Endothelial cell of umbilical vein (primary cell): ENCODE measurements at regions of chr1 and their contacts with region 1.

Region 1: GRCh38 chr1:151459331-151460046 is at the start of gene POGZ:
- DNase-seq: peak; percentile 90
- H3K4me3 ChIP-seq: peak within 1 kb of the TSS; percentile 52 to 95 (median 94)
- H3K27ac ChIP-seq: peak within 1 kb of the TSS; percentile 63
- H3K4me1 ChIP-seq: peaks cover 9% of the 10 kb centered on the region
- H3K27me3 ChIP-seq: peaks cover 4 to 14% of the 10 kb centered on the region in 2 experiments
- CTCF ChIP-seq: no peak
- POLR2A ChIP-seq: peak; percentile 53
- total RNA-seq, gene POGZ: 91.2 and 96.7 TPM in 2 replicates

Region 2: GRCh38 chr1:151472856-151473731 is 13.6 kb after region 1 on chr1:
- CTCF ChIA-PET with region 1: interaction called, 8 read pairs
- POLR2A ChIA-PET with region 1: interaction called, 5 read pairs
- dilution Hi-C with region 1: no loop called
- intact Hi-C with region 1: loop called (anchors 1 kb)
- DNase-seq: peak; percentile 52
- H3K4me3 ChIP-seq: peak overlapping the region; percentile 40 to 64 (median 41)
- H3K27ac ChIP-seq: no peak overlapping the region
- H3K4me1 ChIP-seq: peaks cover 2% of the 10 kb centered on the region
- H3K27me3 ChIP-seq: no peaks in the 10 kb centered on the region
- CTCF ChIP-seq: no peak
- POLR2A ChIP-seq: peak; percentile 39

Region 3: GRCh38 chr1:151510957-151511635 is 51.6 kb after region 1 on chr1 and contains the start of gene CGN:
- CTCF ChIA-PET with region 1: no interaction called
- POLR2A ChIA-PET with region 1: interaction called, 8 read pairs
- dilution Hi-C with region 1: no loop called
- intact Hi-C with region 1: loop called (anchors 2 kb)
- DNase-seq: peak; percentile 89
- H3K4me3 ChIP-seq: peak within 1 kb of the TSS; percentile 29 to 44 (median 38)
- H3K27ac ChIP-seq: no peak within 1 kb of the TSS
- H3K4me1 ChIP-seq: peaks cover 12% of the 10 kb centered on the region
- H3K27me3 ChIP-seq: peaks cover 0 to 2% of the 10 kb centered on the region in 2 experiments
- CTCF ChIP-seq: no peak
- POLR2A ChIP-seq: no peak
- total RNA-seq, gene CGN: 0.73 and 1.2 TPM in 2 replicates

Region 4: GRCh38 chr1:151539990-151540981 is 80.8 kb after region 1 on chr1 and contains the start of gene TUFT1:
- CTCF ChIA-PET with region 1: no interaction called
- POLR2A ChIA-PET with region 1: interaction called, 5 read pairs
- dilution Hi-C with region 1: no loop called
- intact Hi-C with region 1: loop called (anchors 2 kb)
- DNase-seq: peak; percentile 92
- H3K4me3 ChIP-seq: peak within 1 kb of the TSS; percentile 76 to 81 (median 78)
- H3K27ac ChIP-seq: peak within 1 kb of the TSS; percentile 33
- H3K4me1 ChIP-seq: peaks cover 11% of the 10 kb centered on the region
- H3K27me3 ChIP-seq: no peaks in the 10 kb centered on the region
- CTCF ChIP-seq: no peak
- POLR2A ChIP-seq: peak; percentile 97
- total RNA-seq, gene TUFT1: 4.3 TPM in 2 replicates

Region 5: DNA sequence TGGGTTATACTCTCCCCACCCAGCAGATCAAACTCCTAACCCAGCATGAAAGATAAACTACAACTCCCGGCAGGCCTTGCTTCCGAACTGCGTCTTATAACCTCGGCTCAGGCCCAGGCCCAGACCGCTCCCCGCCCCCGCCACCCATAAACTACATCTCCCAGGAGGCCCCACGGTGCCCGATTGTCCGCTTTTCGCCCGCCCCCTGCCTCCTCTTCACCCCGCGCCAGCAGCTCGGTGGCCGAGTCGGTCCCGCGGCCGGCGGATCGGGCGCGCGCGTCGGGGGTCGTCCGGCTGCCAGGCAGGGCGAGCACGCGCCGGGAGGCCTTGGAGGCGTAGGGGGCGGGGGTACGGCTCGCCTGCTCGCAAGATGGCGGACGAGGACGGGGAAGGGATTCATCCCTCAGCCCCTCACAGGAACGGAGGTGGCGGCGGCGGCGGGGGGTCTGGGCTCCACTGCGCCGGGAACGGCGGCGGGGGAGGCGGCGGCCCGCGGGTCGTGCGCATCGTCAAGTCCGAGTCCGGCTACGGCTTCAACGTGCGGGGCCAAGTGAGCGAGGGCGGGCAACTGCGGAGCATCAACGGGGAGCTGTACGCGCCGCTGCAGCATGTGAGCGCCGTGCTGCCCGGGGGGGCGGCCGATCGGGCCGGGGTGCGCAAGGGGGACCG is 152.5 kb after region 1 on chr1 and contains the start of gene SNX27:
- CTCF ChIA-PET with region 1: no interaction called
- POLR2A ChIA-PET with region 1: no interaction called
- dilution Hi-C with region 1: no loop called
- intact Hi-C with region 1: loop called (anchors 5 kb)
- DNase-seq: peak; percentile 95
- H3K4me3 ChIP-seq: peak within 1 kb of the TSS; percentile 83 to 93 (median 84)
- H3K27ac ChIP-seq: peak within 1 kb of the TSS; percentile 41
- H3K4me1 ChIP-seq: peaks cover 8% of the 10 kb centered on the region
- H3K27me3 ChIP-seq: no peaks in the 10 kb centered on the region
- CTCF ChIP-seq: no peak
- POLR2A ChIP-seq: peak; percentile 30
- total RNA-seq, gene SNX27: 24.5 and 24.9 TPM in 2 replicates